CD8-positive, alpha-beta memory T cell (primary cell): ENCODE measurements at regions of chr10 and their contacts with region 1.

Region 1: DNA sequence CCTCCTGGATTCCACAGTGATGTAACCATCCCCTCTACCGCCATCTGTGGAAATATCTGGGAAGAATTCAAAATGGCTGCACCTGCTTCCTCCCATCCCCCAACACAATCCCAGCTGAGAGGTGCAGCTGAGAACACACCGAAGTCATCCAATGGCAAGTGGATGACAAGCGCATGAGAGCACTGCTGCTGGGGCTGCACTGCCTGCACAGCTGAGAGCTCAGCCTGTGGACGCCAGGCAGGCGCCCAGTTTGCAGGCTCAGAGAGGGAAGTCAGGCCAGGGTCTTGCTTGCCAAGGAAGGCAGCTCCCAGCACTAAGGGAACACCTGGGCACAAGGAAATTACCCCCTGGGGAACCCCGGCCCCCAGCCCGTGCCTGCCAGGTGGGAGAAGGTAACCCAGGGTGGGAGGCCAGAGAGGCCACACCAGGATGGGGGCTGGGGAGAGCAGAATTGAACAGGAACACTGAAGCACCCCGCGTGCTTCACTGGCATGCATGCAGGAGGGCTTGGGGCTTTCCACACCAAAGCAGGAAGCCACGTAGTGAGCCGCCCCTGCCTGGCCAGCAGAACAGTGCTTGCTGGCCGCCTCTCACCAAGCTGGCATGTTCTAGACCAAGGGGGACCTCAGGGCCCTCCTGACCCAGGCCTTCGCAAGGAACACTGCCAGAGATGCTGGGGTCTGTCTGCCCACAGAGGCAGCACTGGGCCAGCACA is 46.2 kb downstream of the FAM53B start:
- DNase-seq: peak in 4 of 5 donors; percentile 39 to 72 (median 42)
- H3K4me3 ChIP-seq: peak overlapping the region; percentile 36
- H3K4me3 Mint-ChIP-seq: peak overlapping the region in 6 of 7 donors; percentile 79 to 87 (median 82)
- H3K27ac ChIP-seq: peak overlapping the region; percentile 59
- H3K27ac Mint-ChIP-seq: peak overlapping the region; percentile 93 to 99 (median 98)
- H3K4me1 ChIP-seq: peaks cover 95% of the 10 kb centered on the region
- H3K4me1 Mint-ChIP-seq: peaks cover 95 to 100% (median 99%) of the 10 kb centered on the region in 3 donors
- H3K27me3 ChIP-seq: no peaks in the 10 kb centered on the region
- H3K27me3 Mint-ChIP-seq: no peaks in the 10 kb centered on the region

Region 2: GRCh38 chr10:124708922-124709520 is 11.0 kb after region 1 on chr10:
- CTCF ChIA-PET with region 1: interaction called, 312 read pairs
- POLR2A ChIA-PET with region 1: interaction called, 7 read pairs
- DNase-seq: peak in 1 of 5 donors; percentile 47
- H3K4me3 ChIP-seq: no peak overlapping the region
- H3K4me3 Mint-ChIP-seq: peak overlapping the region in 6 of 7 donors; percentile 47 to 84 (median 58)
- H3K27ac ChIP-seq: peak overlapping the region; percentile 21
- H3K27ac Mint-ChIP-seq: peak overlapping the region; percentile 80 to 96 (median 90)
- H3K4me1 ChIP-seq: peaks cover 89% of the 10 kb centered on the region
- H3K4me1 Mint-ChIP-seq: peaks cover 88 to 93% (median 92%) of the 10 kb centered on the region in 3 donors
- H3K27me3 ChIP-seq: no peaks in the 10 kb centered on the region
- H3K27me3 Mint-ChIP-seq: no peaks in the 10 kb centered on the region

Region 3: GRCh38 chr10:124732931-124733570 is 35.1 kb after region 1 on chr10:
- CTCF ChIA-PET with region 1: interaction called, 312 read pairs
- POLR2A ChIA-PET with region 1: interaction called, 11 read pairs
- DNase-seq: peak in 3 of 5 donors; percentile 42 to 74 (median 46)
- H3K4me3 ChIP-seq: peak overlapping the region; percentile 33
- H3K4me3 Mint-ChIP-seq: peak overlapping the region; percentile 67 to 95 (median 82)
- H3K27ac ChIP-seq: peak overlapping the region; percentile 65
- H3K27ac Mint-ChIP-seq: peak overlapping the region; percentile 89 to 99 (median 96)
- H3K4me1 ChIP-seq: peaks cover 100% of the 10 kb centered on the region
- H3K4me1 Mint-ChIP-seq: peaks cover 95 to 100% (median 97%) of the 10 kb centered on the region in 3 donors
- H3K27me3 ChIP-seq: no peaks in the 10 kb centered on the region
- H3K27me3 Mint-ChIP-seq: no peaks in the 10 kb centered on the region